Heart right ventricle (tissue), 16 donors: ENCODE measurements at regions of chr10 and their contacts with region 1.

Region 1: GRCh38 chr10:7432884-7433726 is 22.3 kb upstream of the SFMBT2 start:
- DNase-seq: no peak
- ATAC-seq: no peak
- H3K4me3 ChIP-seq: no peak overlapping the region
- H3K27ac ChIP-seq: no peak overlapping the region
- H3K4me1 ChIP-seq: peaks cover 0 to 14% (median 0%) of the 10 kb centered on the region in 9 donors
- H3K27me3 ChIP-seq: peaks cover 0 to 27% (median 18%) of the 10 kb centered on the region in 7 donors
- CTCF ChIP-seq: no peak

Region 2: GRCh38 chr10:6416892-6417512 is 1016.1 kb before region 1 on chr10:
- intact Hi-C with region 1: loop called in 1 of 10 experiments (anchors 10 kb)
- DNase-seq: no peak
- ATAC-seq: peak in 4 of 8 donors; percentile 41 to 70 (median 50)
- H3K4me3 ChIP-seq: no peak overlapping the region
- H3K27ac ChIP-seq: no peak overlapping the region
- H3K4me1 ChIP-seq: no peaks in the 10 kb centered on the region
- H3K27me3 ChIP-seq: peaks cover 0 to 8% (median 0%) of the 10 kb centered on the region in 7 donors
- CTCF ChIP-seq: peak in 8 of 9 donors; percentile 33 to 73 (median 65)

Region 3: DNA sequence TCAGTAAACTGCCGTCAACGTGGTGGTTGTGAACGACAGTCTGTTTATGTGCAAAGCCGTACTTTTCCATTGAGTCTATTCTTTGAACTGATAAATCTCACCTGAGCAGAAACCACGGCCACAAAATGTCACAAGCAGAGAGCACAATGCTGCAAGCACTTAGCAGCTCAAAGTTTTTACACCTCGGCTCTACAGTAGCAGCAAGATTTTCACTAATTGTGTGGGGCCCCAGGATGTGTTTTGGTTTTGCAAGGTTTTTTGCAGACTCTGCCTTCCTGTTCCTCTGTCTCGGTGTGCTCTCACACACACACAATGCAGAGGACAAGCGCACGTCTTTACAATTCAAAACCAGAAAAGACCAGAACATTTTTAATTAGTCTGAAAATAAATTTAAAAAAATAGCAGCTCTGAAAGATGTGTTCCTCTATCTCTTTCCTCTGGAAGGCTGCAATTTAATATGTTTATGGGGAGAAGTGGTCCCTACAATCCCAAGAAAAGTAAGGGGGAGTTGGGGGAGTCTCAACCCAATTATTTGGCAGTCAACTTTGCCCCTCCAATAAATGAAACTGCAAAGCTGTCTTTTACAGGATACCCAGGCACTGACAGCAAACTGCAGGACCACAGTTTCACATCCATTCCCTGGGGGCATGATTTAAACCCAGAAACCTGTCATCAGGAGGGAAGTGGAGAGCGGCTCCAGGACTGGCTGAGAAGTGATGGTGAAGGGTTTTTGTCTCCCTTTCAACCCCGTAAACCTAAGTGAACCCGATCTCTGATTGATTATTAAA is 51.5 kb after region 1 on chr10:
- intact Hi-C with region 1: loop called in 1 of 10 experiments (anchors 10 kb)
- DNase-seq: no peak
- ATAC-seq: peak in 4 of 8 donors; percentile 33 to 65 (median 37)
- H3K4me3 ChIP-seq: peak overlapping the region in 4 of 10 donors; percentile 19 to 33 (median 29)
- H3K27ac ChIP-seq: peak overlapping the region in 5 of 10 donors; percentile 30 to 88 (median 38)
- H3K4me1 ChIP-seq: peaks cover 2 to 82% (median 26%) of the 10 kb centered on the region in 9 donors
- H3K27me3 ChIP-seq: peaks cover 0 to 11% (median 0%) of the 10 kb centered on the region in 7 donors
- CTCF ChIP-seq: no peak

Region 4: DNA sequence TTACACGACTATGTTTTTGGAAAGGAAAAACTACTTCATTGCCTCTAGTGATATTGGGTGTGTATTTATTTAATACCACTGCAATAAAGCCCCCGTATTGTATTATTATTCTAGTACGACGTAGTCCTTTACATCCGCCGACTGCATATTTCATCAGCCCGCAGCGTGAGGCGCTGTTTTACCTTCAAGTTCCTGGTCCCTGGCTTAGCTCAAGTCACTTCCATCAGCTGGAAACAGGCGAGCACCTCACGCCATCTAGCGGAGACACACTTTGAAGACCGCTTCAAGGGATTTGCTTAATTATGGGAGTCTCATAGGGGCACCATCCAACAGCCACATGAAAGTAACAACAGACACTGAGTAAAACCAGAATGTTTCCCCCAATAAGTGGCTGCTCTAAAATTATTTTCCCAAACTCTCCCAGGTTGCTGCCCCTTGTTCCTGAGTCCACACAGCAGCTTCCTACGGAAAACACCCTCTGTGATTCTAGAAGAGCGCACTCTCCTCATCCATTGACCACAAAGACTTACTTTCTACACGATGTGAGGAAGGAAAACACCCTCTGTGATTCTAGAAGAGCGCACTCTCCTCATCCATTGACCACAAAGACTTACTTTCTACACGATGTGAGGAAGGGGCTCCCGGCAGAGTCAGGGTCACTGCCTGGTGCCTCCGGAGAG is 254.3 kb after region 1 on chr10:
- intact Hi-C with region 1: loop called in 1 of 10 experiments (anchors 5 kb)
- DNase-seq: peak; percentile 65 to 89
- ATAC-seq: peak; percentile 72 to 94 (median 92)
- H3K4me3 ChIP-seq: no peak overlapping the region
- H3K27ac ChIP-seq: no peak overlapping the region
- H3K4me1 ChIP-seq: peaks cover 0 to 3% (median 0%) of the 10 kb centered on the region in 9 donors
- H3K27me3 ChIP-seq: peaks cover 0 to 3% (median 0%) of the 10 kb centered on the region in 7 donors
- CTCF ChIP-seq: peak; percentile 77 to 97 (median 87)